WTC11 (cell line): ENCODE measurements at regions of chr17 and their contacts with region 1.

Region 1: GRCh38 chr17:67016039-67016762 is 28.2 kb upstream of the CACNG1 start:
- DNase-seq: peak; percentile 78
- ATAC-seq: peak; percentile 91
- H3K4me3 Mint-ChIP-seq: no peak overlapping the region
- H3K27ac Mint-ChIP-seq: no peak overlapping the region
- H3K4me1 Mint-ChIP-seq: peaks cover 4% of the 10 kb centered on the region
- H3K27me3 Mint-ChIP-seq: no peaks in the 10 kb centered on the region
- CTCF ChIP-seq: peak; percentile 33; the same call in 1 of the 2 replicates

Region 2: GRCh38 chr17:66713533-66714042 is 302.6 kb before region 1 on chr17:
- CTCF ChIA-PET with region 1: interaction called, 11 read pairs
- POLR2A ChIA-PET with region 1: no interaction called
- DNase-seq: no peak
- ATAC-seq: no peak
- H3K4me3 Mint-ChIP-seq: no peak overlapping the region
- H3K27ac Mint-ChIP-seq: no peak overlapping the region
- H3K4me1 Mint-ChIP-seq: peaks cover 77% of the 10 kb centered on the region
- H3K27me3 Mint-ChIP-seq: no peaks in the 10 kb centered on the region
- CTCF ChIP-seq: no peak

Region 3: GRCh38 chr17:66915204-66916096 is 100.8 kb before region 1 on chr17:
- CTCF ChIA-PET with region 1: interaction called, 18 read pairs
- POLR2A ChIA-PET with region 1: no interaction called
- DNase-seq: peak; percentile 43
- ATAC-seq: peak; percentile 82
- H3K4me3 Mint-ChIP-seq: no peak overlapping the region
- H3K27ac Mint-ChIP-seq: no peak overlapping the region
- H3K4me1 Mint-ChIP-seq: no peaks in the 10 kb centered on the region
- H3K27me3 Mint-ChIP-seq: no peaks in the 10 kb centered on the region; the same call in none of the 2 replicates
- CTCF ChIP-seq: no peak

Region 4: GRCh38 chr17:66944351-66945139 is 71.7 kb before region 1 on chr17:
- CTCF ChIA-PET with region 1: interaction called, 12 read pairs
- POLR2A ChIA-PET with region 1: no interaction called
- DNase-seq: no peak
- ATAC-seq: peak; percentile 54
- H3K4me3 Mint-ChIP-seq: no peak overlapping the region
- H3K27ac Mint-ChIP-seq: 0 out of 2 replicates have a peak overlapping the region, but pooled peaks have one; percentile 18
- H3K4me1 Mint-ChIP-seq: peaks cover 19% of the 10 kb centered on the region
- H3K27me3 Mint-ChIP-seq: no peaks in the 10 kb centered on the region; the same call in 1 of the 2 replicates
- CTCF ChIP-seq: no peak

Region 5: DNA sequence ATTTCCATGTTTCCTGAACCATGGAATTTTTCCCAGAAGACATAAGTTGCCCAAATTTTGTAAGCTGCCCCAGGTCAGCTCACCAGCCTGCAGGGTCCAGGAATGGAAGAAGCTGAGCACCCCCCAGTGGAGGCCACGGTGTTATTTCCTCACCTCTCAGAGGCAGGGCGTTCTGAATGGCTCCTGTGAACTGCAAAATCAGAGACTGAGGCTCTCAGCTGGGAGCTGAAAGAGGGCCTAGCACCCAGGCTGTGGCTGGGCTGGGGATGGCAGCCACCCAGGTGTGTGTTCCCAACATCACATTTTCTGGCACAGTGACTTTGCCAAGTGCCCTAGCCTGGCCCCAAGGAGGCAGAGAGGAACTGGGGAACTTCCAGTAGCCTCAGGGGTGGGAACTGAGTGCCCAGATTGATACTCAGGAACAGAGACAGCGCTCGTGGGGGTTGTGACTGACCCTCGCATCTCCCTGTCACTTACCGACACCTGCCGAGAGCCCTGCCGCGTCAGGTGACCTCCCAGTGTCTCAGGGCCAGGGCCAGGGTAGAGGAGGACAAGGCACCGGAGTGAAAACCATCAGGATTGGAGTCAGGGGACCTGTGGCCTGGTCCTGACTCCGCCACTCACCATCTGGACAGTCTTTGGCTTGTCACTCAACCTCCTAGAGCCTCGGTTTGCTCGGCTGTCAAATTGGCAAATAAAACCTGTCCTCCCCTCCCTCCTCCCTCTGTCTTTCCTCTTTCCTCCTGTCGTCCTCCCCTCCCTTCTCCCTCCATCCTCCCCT is 40.4 kb before region 1 on chr17:
- CTCF ChIA-PET with region 1: interaction called, 16 read pairs
- POLR2A ChIA-PET with region 1: no interaction called
- DNase-seq: peak; percentile 70
- ATAC-seq: peak; percentile 79
- H3K4me3 Mint-ChIP-seq: no peak overlapping the region
- H3K27ac Mint-ChIP-seq: no peak overlapping the region
- H3K4me1 Mint-ChIP-seq: peaks cover 13% of the 10 kb centered on the region
- H3K27me3 Mint-ChIP-seq: no peaks in the 10 kb centered on the region
- CTCF ChIP-seq: no peak

Region 6: DNA sequence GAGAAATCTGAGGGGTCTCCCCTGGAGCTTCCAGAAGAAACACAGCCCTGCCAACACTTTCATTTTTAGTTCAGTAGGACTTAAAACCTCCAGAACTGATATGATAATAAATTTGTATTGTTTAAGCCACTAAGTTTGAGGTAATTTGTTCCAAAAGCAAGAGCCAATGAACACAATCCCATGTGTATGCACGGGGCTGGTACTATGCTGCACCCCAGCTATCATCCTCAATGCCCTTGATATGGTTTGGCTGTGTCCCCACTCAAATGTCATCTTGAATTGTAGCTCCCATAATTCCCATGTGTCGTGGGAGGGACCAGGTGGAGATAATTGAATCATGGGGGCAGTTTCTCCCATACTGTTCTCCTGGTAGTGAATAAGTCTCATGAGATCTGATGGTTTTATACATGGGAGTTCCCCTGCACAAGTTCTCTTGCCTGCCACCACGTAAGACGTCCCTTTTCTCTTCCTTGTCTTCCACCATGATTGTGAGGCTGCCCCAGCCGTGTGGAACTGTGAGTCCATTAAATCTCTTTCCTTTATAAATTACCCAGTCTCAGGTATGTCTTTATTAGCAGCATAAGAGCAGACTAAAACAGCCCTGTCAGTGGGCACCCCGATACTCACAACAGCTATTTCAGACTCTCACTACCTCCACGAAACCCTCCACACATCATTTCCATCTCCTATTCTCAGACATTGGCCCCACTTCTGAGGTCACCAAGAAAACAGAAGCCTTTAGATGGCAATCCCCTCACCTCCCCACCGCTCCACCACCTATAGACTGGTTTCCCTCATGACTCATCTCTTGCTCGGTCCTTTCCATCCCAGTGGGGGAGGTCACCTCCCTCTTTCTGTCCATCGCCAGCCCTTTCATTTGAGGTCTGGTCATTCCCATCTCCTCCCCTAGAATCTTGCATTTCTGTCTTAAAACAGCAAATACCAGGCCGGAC is 19.2 kb after region 1 on chr17:
- CTCF ChIA-PET with region 1: interaction called, 25 read pairs
- POLR2A ChIA-PET with region 1: no interaction called
- DNase-seq: no peak
- ATAC-seq: no peak
- H3K4me3 Mint-ChIP-seq: no peak overlapping the region
- H3K27ac Mint-ChIP-seq: no peak overlapping the region
- H3K4me1 Mint-ChIP-seq: no peaks in the 10 kb centered on the region; the same call in 1 of the 2 replicates
- H3K27me3 Mint-ChIP-seq: no peaks in the 10 kb centered on the region
- CTCF ChIP-seq: no peak